WTC11 (cell line): ENCODE measurements at regions of chr6 and their contacts with region 1.

Region 1: DNA sequence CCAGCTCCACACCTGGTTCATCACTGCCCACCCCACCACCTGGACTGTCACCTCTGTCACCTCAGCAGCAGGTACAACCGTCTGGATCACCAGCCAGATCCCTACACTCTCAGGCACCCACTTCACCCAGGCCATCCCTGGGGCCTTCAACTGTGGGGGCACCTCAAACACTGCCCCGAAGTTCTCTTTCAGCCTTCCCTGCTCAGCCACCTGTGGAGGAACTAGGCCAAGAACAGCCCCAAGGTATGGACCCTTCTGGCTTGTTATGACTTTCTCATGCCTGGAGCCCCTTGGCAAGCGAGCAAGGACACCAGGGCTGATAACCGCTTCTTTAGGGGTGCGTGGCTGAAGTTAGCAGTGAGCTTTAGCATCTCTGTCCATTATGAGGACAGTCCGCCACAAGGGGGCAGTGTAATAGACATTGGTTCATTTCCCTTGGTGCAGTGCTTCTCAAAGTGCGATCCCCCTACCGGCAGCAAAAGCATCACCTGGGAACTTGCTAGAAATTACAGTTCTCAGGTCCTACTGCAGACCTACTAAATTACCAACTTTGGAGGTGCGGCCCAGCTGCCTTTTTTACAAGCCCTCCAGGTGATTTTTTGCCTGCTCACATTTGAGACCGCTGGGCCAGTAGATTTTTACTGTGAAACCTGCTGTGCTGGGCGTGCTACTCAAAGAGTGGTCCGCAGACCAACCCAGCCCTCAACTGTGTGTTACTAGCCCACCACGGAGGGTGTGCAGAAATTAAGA is 32.5 kb downstream of the PNPLA1 start:
- DNase-seq: peak; percentile 97
- ATAC-seq: peak; percentile 92
- H3K4me3 Mint-ChIP-seq: no peak overlapping the region
- H3K27ac Mint-ChIP-seq: peak overlapping the region; percentile 45; the same call in 1 of the 2 replicates
- H3K4me1 Mint-ChIP-seq: peaks cover 9% of the 10 kb centered on the region
- H3K27me3 Mint-ChIP-seq: no peaks in the 10 kb centered on the region
- CTCF ChIP-seq: peak; percentile 96

Region 2: GRCh38 chr6:36245572-36246061 is 56.8 kb before region 1 on chr6:
- CTCF ChIA-PET with region 1: interaction called, 24 read pairs
- POLR2A ChIA-PET with region 1: no interaction called
- DNase-seq: peak; percentile 62
- ATAC-seq: peak; percentile 78
- H3K4me3 Mint-ChIP-seq: no peak overlapping the region
- H3K27ac Mint-ChIP-seq: peak overlapping the region; percentile 85
- H3K4me1 Mint-ChIP-seq: peaks cover 54% of the 10 kb centered on the region
- H3K27me3 Mint-ChIP-seq: no peaks in the 10 kb centered on the region; the same call in 1 of the 2 replicates
- CTCF ChIP-seq: no peak

Region 3: GRCh38 chr6:36290661-36291620 is 11.5 kb before region 1 on chr6:
- CTCF ChIA-PET with region 1: interaction called, 65 read pairs
- POLR2A ChIA-PET with region 1: no interaction called
- DNase-seq: no peak
- ATAC-seq: no peak
- H3K4me3 Mint-ChIP-seq: no peak overlapping the region
- H3K27ac Mint-ChIP-seq: no peak overlapping the region
- H3K4me1 Mint-ChIP-seq: peaks cover 10% of the 10 kb centered on the region
- H3K27me3 Mint-ChIP-seq: no peaks in the 10 kb centered on the region
- CTCF ChIP-seq: no peak

Region 4: DNA sequence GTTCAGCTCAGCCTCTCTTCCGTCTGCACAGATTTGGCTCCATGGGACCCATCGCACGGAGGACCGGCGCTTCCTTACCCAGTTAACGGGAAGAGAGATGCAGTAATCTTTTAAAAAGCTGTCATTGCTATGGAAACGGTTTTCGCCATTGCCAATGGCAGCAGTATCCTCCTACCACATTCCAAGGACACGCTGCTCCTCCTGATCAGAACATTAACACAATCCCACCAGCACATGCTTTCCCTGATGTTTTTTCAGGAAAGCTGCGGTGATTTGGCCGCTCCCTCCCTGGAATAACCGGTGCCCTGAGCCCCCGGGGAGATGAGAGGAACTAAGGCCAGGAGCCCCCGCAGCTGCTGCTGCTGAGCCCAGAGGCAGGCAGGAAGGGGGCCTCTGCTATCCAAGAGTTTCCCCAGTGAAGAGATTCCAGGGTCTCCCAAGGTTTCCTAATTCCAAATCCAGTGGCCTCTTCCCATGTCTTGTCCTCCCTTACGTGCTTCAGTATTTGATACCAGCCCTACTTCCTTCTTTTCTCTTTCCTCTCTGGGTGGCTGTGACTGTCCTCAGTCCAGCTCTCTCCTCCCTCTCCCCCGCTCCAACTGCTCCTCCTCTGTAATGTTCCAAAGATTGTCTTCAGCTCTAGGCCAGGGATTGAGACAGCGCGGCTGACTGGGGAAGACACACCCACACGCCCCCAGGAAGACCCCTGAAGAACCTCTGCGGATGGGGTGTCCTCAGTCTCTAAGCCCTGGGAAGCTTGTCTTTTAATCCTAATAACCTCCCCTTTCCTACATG is 31.7 kb after region 1 on chr6:
- CTCF ChIA-PET with region 1: interaction called, 43 read pairs
- POLR2A ChIA-PET with region 1: no interaction called
- DNase-seq: no peak
- ATAC-seq: no peak
- H3K4me3 Mint-ChIP-seq: no peak overlapping the region
- H3K27ac Mint-ChIP-seq: no peak overlapping the region
- H3K4me1 Mint-ChIP-seq: peaks cover 11% of the 10 kb centered on the region
- H3K27me3 Mint-ChIP-seq: peaks cover 4% of the 10 kb centered on the region
- CTCF ChIP-seq: no peak

Region 5: DNA sequence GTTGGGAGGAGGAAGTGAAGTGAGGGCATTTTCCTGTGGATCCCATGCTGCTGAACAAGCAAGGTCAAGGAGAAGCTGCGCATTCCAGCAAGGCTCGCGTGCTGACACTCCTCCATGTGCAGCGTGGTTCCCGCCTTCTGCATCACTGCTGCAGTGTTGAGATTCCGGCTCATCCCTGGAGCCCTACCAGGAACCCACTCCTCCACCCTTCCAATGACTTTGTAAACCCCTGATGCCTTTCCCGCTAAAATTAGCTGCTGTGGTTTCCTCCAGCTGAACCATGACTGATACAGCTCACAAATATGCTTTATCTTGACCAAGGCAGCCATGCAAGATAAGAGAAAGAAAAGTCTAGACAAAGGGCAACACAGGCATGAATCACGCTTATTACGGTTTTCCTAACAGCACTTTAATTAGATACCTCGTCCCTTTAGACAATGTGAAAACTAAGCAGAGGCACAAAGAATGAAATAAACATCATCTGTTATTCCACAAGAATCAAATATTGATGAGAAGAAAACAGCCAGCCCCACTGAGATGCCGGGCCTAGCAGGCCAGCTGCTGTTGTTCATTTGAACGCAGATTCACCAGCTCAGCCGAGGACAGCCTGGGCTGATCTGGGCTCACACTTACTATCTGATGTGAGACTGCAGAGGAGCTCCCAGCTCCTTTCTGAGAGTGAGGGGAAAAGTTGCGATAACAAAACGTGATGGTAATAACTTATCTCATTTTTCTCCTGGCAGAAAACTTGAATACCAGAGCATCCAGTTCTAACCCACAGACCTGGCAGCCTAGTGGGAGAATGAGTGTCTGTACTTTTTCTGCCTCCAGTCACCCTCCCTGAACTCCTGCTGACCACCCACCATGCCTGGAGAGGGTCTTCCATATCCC is 48.5 kb after region 1 on chr6:
- CTCF ChIA-PET with region 1: interaction called, 14 read pairs
- POLR2A ChIA-PET with region 1: no interaction called
- DNase-seq: no peak
- ATAC-seq: no peak
- H3K4me3 Mint-ChIP-seq: no peak overlapping the region
- H3K27ac Mint-ChIP-seq: no peak overlapping the region
- H3K4me1 Mint-ChIP-seq: peaks cover 11% of the 10 kb centered on the region
- H3K27me3 Mint-ChIP-seq: peaks cover 3% of the 10 kb centered on the region; the same call in 1 of the 2 replicates
- CTCF ChIP-seq: no peak